Cardiac septum (tissue), 1 donor: ENCODE measurements at regions of chr19 and their contacts with region 1.

Region 1: GRCh38 chr19:51367565-51368365 is 1.0 kb downstream of the CLDND2 start:
- DNase-seq: peak; percentile 100

Region 2: DNA sequence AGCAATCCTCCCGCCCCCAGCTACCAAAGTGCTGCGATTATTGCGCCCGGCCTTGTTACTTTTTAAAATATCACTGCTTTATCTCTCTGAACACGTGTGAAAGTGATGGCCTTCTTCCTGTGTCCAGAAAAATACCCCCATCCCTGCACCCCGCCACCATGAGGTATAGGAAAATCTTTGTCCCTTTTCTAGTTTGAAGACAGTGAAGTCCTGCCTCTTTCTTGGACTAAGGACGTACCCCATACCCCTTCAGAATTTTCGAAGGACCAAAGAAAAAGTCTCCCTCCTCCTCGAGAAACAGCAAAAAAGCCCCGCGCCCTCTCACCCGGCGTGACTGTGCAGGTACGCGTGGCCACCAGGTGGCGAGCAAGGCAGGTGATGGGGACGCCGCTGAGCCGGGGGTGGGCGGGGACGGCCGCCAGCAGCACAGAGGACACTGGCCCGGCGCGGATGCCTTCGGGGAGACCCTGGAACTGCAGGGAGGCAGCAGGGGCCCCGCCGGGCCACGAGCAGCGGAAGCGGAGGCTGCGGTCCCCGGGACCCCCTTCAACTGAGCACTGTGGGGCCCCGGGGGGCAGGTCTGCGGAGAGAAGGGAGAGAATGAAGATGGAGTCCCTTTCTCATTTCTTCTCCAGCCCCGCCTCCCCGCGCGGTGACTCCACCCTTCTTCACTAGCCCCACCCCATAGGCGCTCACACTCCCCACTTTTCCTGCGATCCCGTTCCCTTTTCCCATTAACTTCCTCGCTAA is 29.0 kb before region 1 on chr19:
- intact Hi-C with region 1: loop called (anchors 2 kb)
- DNase-seq: peak; percentile 92

Region 3: DNA sequence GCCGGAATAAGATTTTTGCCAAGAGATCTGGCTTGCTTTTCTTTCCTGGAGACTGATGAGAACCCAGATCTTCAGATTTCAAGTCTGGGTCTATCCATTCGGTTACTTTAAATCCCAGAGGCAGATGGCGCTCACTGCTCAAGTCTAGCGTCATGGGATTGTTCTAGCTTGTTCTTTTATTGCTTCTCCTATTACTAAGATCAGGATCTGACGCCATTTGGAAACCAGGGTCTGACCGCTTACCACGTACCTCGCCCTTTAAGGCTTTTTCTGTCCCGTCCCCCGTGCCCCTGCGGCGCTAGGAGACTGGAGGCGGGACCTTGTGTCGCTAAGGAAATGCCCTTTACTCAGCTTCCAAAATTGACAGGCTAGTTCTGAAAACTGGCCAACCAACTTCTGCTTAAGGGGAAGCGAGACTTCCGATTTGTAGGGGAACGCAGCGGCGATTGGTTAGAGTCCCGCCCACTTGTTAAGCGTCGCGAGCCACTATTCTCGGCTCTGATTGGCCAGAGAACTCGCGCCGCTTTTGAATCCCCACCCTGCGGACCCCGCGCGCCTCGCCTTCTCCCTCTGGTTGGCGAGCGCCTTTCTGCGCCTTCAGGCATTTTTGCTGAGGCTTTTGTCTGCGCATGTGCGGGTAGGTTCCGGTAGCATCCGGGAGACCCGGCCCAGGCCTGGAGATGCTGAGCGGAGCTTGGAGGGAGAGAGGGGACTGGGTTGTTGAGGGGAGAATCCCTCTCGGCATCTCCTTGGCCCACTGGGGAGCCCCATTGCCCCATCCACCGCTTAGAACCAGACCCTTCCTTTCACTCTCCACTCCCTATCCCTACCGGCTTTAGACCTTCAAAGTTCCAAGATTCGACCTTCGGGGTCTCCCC is 26.4 kb after region 1 on chr19:
- intact Hi-C with region 1: loop called (anchors 2 kb)
- DNase-seq: peak; percentile 95

Region 4: GRCh38 chr19:51688672-51689571 is 321.2 kb after region 1 on chr19:
- intact Hi-C with region 1: loop called (anchors 2 kb)
- DNase-seq: peak; percentile 96